A549 (cell line): ENCODE measurements at regions of chr5 and their contacts with region 1.

Region 1: DNA sequence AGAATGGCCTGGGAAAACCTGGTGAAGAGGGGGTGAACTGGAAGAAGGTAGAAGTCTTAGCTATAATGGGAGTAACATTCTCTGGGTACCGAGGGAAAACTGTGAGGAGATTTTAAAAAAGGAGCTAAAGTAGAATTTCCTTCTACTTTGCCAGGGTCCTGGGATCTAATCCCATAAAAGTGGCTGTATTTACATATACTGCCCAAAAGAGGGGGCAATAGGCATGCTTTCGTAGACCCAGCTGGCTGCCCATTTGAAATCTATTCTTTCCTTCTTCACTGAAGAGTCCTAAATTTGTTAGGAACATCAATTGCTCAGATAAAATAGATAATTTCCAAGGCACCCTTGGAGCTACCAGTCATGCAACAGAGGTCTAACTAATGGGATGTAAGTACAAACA is 159.2 kb downstream of the CDC42SE2 start:
- DNase-seq: peak; percentile 13 to 27
- ATAC-seq: peak; percentile 66 to 84; a peak in 5 of 6 replicates
- H3K4me3 ChIP-seq: no peak overlapping the region
- H3K27ac ChIP-seq: no peak overlapping the region
- H3K4me1 ChIP-seq: no peaks in the 10 kb centered on the region
- CTCF ChIP-seq: peak; percentile 53; the same call in 2 of the 3 replicates
- EP300 ChIP-seq: no peak
- POLR2A ChIP-seq: no peak
- RAD21 ChIP-seq: peak; percentile 68 to 71

Region 2: GRCh38 chr5:131436081-131436480 is 13.0 kb after region 1 on chr5:
- CTCF ChIA-PET with region 1: interaction called, 10 read pairs
- POLR2A ChIA-PET with region 1: no interaction called
- DNase-seq: no peak
- ATAC-seq: no peak
- H3K4me3 ChIP-seq: no peak overlapping the region
- H3K27ac ChIP-seq: no peak overlapping the region
- H3K4me1 ChIP-seq: no peaks in the 10 kb centered on the region
- CTCF ChIP-seq: no peak
- EP300 ChIP-seq: no peak
- POLR2A ChIP-seq: no peak
- RAD21 ChIP-seq: no peak